H1 (cell line): ENCODE measurements at regions of chr12 and their contacts with region 1.

Region 1: DNA sequence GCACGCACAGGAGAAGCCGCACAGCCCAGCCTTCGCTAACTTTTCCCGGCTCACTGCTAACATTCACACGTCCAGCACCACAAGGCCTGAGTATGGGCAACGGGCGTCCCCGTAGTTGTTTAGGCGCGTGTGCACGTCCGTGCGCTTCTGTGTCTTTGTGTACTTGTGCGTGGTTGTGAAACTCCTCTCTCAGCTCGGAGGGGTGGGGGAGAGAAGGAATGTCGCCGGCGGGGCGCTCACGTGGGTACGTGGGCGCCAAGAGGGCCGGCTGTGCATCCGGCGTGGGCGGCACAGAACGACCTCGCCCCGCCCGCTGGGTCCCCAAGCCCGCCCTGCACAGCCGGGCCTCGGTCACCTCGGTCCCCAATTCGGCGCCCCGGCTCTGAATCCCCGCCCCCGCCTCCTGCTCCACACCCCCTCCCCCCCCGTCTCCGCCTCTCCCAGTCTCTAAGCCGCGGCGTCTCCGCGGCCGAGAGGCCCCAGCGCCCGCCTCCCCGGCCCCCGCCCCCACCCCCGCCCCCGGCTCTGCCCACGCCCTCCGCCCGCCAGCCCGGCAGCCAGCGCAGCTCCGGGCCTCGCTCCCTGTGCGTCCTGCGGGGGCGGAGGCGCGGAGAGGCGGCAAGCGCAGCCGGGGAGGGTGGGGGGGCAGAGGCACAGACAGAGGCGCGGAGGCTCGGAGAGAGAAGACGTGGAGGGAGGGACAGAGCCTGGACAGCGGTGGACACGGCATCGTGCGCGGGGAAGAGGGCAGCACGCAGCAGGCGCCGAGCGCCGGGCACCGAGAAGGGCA is at the start of gene NAB2:
- DNase-seq: peak in 1 of 2 experiments; percentile 87
- H3K4me3 ChIP-seq: peak within 1 kb of the TSS; percentile 92 to 96 (median 93)
- H3K27ac ChIP-seq: peak within 1 kb of the TSS; percentile 84
- H3K4me1 ChIP-seq: peaks cover 0 to 25% (median 15%) of the 10 kb centered on the region in 4 experiments; a peak in 6 of 7 replicates
- H3K27me3 ChIP-seq: no peaks in the 10 kb centered on the region
- CTCF ChIP-seq: no peak
- EP300 ChIP-seq: no peak
- POLR2A ChIP-seq: 0 out of 3 replicates have a peak, but pooled peaks of 1 of the 2 experiments have one; percentile 3
- RAD21 ChIP-seq: no peak
- total RNA-seq, gene NAB2: 20.6 and 20.9 TPM in 2 replicates

Region 2: DNA sequence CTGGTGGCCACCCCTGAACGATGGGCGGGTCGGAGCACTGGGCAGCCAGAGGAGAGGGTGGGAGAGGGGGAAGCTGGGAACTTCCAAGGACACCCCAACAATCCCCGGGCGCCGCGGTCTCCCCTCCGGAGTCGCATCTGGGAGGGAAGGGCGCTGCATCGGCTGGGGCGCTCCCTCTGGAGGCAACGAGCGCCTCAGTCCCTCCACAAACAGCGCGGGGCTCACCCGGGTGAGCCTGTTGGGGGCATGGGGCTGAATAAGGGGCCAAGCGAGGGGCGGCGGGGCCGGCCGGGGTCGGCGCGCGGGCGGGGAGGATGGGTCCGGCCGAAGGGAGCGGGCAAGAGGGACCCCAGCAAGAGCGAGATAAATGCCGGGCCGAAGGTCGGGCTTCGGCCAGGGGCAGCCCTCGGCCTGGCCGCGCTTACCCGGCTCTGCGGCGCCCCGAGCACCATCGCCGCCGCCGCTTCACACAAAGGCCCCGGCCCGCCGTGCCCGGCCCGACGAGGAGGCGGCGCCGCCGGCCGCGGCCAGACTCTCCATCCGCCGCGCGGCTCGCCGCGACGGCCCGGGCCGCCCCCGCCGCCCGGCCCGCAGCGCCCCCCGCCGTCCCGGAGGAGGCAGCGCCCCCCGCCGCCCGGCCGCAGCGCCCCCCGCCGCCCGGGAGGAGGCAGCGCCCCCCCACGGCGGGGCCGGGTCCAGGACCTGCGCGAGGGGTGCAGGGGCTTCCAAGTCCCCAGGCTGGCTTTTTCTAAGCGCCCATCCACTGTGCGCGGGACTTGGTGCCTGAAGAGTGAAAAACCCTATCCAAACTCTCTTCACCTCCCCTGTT is 82.5 kb before region 1 on chr12 and contains the start of gene ZBTB39:
- CTCF ChIA-PET with region 1: interaction called, 10 read pairs
- POLR2A ChIA-PET with region 1: no interaction called
- DNase-seq: peak in 1 of 2 experiments; percentile 81
- H3K4me3 ChIP-seq: peak within 1 kb of the TSS; percentile 73 to 96 (median 82)
- H3K27ac ChIP-seq: peak within 1 kb of the TSS; percentile 60; the same call in 1 of the 2 replicates
- H3K4me1 ChIP-seq: peaks cover 2 to 14% (median 8%) of the 10 kb centered on the region in 4 experiments; a peak in 6 of 7 replicates
- H3K27me3 ChIP-seq: no peaks in the 10 kb centered on the region
- CTCF ChIP-seq: peak; percentile 35 to 88 (median 62)
- EP300 ChIP-seq: no peak
- POLR2A ChIP-seq: peak; percentile 56 to 69; a peak in 2 of 3 replicates
- RAD21 ChIP-seq: 0 out of 4 replicates have a peak, but pooled peaks of 1 of the 2 experiments have one; percentile 5
- total RNA-seq, gene ZBTB39: 24.5 and 25.0 TPM in 2 replicates

Region 3: DNA sequence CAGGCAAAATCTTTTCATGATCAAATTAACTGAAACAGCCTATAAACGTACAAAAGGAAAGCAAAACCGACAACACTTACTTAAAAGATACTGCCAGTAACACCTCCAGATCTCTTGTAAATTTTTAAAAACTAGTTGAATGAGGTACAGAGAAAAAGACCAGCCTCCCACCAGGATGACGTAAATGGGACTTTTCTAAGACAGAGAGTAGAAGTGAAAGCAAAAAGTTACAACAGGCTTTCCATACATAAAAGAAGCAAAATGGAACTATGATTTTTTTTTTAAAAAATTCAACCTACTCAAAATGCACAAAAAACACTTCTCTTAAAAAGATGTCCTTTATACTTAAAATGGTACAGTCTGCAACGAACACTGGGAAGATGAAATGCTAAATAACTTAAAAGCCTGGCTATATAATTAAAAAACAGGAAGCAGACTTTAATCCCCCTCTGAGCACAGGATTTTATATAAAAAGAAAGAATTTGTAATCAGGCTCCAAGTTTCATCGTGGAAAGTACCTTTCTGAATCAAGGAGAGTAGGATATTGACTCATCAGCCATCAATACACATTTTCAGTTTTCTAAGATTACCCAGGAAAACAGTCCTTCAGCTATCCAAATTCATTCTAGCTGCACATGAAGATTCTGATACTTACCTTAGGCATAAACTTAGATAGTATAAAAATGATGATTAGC is 24.5 kb before region 1 on chr12:
- CTCF ChIA-PET with region 1: interaction called, 206 read pairs
- POLR2A ChIA-PET with region 1: interaction called, 20 read pairs
- DNase-seq: no peak
- H3K4me3 ChIP-seq: no peak overlapping the region
- H3K27ac ChIP-seq: no peak overlapping the region
- H3K4me1 ChIP-seq: no peaks in the 10 kb centered on the region
- H3K27me3 ChIP-seq: no peaks in the 10 kb centered on the region
- CTCF ChIP-seq: no peak
- EP300 ChIP-seq: no peak
- POLR2A ChIP-seq: no peak
- RAD21 ChIP-seq: no peak

Region 4: DNA sequence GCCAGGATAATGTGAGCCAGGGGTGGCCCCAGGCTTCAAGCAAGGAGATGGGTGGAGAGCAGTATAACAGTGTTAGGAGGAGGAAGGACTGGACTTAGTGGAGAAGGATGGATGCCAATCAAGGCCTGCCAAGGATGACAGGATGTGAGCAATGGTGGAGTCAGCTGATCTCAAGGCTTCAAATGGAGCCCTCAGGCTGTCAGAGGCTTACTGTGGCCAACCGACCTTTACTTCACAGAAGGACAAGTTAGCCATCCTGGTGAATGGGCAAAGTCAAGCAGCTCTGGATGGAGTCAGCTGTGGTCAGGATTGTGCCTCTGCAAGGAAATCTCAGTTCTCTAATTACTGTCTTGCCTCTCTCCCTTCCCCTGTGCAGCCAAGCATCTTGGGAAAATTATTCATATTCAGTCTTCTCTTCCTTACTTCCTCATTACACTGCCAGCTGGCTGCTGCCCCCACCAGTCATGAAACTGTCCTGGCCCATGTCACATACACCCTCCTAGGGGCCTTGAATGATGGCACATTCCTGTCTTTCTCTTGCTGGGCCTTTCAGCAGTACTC is 30.1 kb after region 1 on chr12:
- CTCF ChIA-PET with region 1: interaction called, 325 read pairs
- POLR2A ChIA-PET with region 1: interaction called, 352 read pairs
- DNase-seq: no peak
- H3K4me3 ChIP-seq: no peak overlapping the region
- H3K27ac ChIP-seq: no peak overlapping the region
- H3K4me1 ChIP-seq: no peaks in the 10 kb centered on the region
- H3K27me3 ChIP-seq: peaks cover 0 to 2% (median under 1%) of the 10 kb centered on the region in 4 experiments; a peak in 1 of 7 replicates
- CTCF ChIP-seq: no peak
- EP300 ChIP-seq: no peak
- POLR2A ChIP-seq: no peak
- RAD21 ChIP-seq: no peak

Region 5: DNA sequence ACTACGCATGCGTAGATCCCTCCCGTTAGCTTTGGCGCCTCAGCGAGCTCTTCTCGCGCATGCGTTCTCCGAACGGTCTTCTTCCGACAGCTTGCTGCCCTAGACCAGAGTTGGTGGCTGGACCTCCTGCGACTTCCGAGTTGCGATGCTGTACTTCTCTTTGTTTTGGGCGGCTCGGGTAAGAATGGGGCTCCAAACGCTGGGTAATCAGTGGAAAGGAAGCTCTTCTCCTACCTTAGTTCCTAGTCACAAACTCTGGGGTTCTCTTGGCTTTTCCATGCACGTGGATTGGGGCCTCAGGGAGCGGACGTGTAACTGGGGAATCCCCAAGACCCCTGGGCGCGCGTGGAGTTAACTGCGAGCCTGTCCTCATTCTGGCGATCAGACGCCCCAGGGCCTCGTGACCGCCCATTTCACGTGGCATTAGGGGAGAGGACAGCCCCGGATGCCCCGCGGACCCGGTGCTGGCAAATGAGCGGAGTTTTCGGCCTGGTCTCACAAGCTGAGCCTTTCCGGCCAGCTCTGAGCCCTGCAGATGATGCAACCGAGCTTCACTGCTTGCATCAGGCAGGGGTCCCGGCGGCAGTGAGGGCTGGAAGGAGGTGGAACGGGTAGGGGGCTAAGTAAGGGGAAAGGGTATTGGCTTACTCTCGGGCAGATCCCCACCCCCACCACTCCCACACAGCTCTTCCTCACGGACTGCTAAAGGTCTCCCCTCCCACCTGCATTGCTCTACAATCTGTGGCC is 141.2 kb after region 1 on chr12 and contains the start of gene SHMT2:
- CTCF ChIA-PET with region 1: interaction called, 3 read pairs
- POLR2A ChIA-PET with region 1: interaction called, 13 read pairs
- DNase-seq: peak; percentile 91 to 94
- H3K4me3 ChIP-seq: peak within 1 kb of the TSS; percentile 69 to 93 (median 81)
- H3K27ac ChIP-seq: peak within 1 kb of the TSS; percentile 85
- H3K4me1 ChIP-seq: peaks cover 4 to 43% (median 21%) of the 10 kb centered on the region in 4 experiments
- H3K27me3 ChIP-seq: peaks cover 11 to 32% (median 26%) of the 10 kb centered on the region in 4 experiments
- CTCF ChIP-seq: no peak
- EP300 ChIP-seq: 0 out of 3 replicates have a peak, but pooled peaks of 1 of the 2 experiments have one; percentile 37
- POLR2A ChIP-seq: peak in 1 of 2 experiments; percentile 68; a peak in 2 of 3 replicates
- RAD21 ChIP-seq: no peak
- total RNA-seq, gene SHMT2: 274 and 283 TPM in 2 replicates